CD8-positive, alpha-beta T cell (primary cell): ENCODE measurements at regions of chr20 and their contacts with region 1.

Region 1: DNA sequence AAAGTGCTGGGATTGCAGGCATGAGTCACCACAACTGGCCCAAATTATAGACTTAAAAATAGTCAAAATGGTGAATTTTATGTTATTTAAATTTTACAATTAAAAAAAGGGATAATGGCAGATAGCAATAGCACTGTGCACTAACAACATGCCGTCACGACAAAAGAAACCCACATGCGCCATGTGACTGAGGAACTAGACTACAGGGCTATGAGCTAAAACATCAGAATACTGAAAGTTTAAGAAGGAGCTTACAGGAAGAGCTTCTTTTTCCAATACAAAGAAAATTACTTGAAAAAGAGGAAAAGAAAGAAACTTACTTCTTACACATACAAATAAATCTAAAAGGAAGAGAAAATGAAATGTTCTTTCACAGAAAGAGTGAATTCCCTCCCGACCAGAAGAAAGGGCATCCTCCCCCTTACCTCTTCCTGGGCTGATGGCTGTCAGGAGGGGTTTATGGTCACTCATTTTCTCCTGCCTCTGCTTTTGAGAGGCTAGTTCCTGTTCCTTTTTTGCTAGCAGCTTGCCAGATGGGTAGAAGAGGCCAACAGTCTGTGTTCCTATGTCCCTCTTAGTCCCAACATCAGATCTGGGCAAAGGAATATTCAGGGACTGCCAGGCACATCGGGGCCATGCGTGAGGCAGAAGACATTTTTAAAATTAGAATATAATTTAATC is 54.5 kb downstream of the DZANK1 start:
- DNase-seq: no peak
- ATAC-seq: no peak
- H3K4me3 ChIP-seq: no peak overlapping the region
- H3K4me3 Mint-ChIP-seq: no peak overlapping the region
- H3K27ac ChIP-seq: no peak overlapping the region
- H3K27ac Mint-ChIP-seq: no peak overlapping the region
- H3K4me1 ChIP-seq: no peaks in the 10 kb centered on the region
- H3K4me1 Mint-ChIP-seq: peaks cover 3% of the 10 kb centered on the region
- H3K27me3 ChIP-seq: no peaks in the 10 kb centered on the region
- H3K27me3 Mint-ChIP-seq: no peaks in the 10 kb centered on the region
- CTCF ChIP-seq: no peak

Region 2: GRCh38 chr20:18496042-18496441 is 83.7 kb after region 1 on chr20:
- CTCF ChIA-PET with region 1: no interaction called
- POLR2A ChIA-PET with region 1: no interaction called
- intact Hi-C with region 1: no loop called
- DNase-seq: no peak
- ATAC-seq: no peak
- H3K4me3 ChIP-seq: no peak overlapping the region
- H3K4me3 Mint-ChIP-seq: peak overlapping the region; percentile 96
- H3K27ac ChIP-seq: no peak overlapping the region
- H3K27ac Mint-ChIP-seq: peak overlapping the region; percentile 37
- H3K4me1 ChIP-seq: peaks cover 16% of the 10 kb centered on the region
- H3K4me1 Mint-ChIP-seq: peaks cover 20% of the 10 kb centered on the region
- H3K27me3 ChIP-seq: no peaks in the 10 kb centered on the region
- H3K27me3 Mint-ChIP-seq: no peaks in the 10 kb centered on the region
- CTCF ChIP-seq: no peak

Region 3: GRCh38 chr20:18507218-18508021 is 95.1 kb after region 1 on chr20 and contains the start of gene SEC23B:
- CTCF ChIA-PET with region 1: interaction called, 3 read pairs
- POLR2A ChIA-PET with region 1: no interaction called
- intact Hi-C with region 1: loop called (anchors 1 to 2 kb)
- DNase-seq: peak; percentile 96 to 100 (median 98)
- ATAC-seq: peak; percentile 82
- H3K4me3 ChIP-seq: peak within 1 kb of the TSS; percentile 63 to 87
- H3K4me3 Mint-ChIP-seq: peak within 1 kb of the TSS; percentile 100
- H3K27ac ChIP-seq: peak within 1 kb of the TSS; percentile 97 to 100
- H3K27ac Mint-ChIP-seq: peak within 1 kb of the TSS; percentile 100
- H3K4me1 ChIP-seq: peaks cover 17% of the 10 kb centered on the region
- H3K4me1 Mint-ChIP-seq: peaks cover 47% of the 10 kb centered on the region
- H3K27me3 ChIP-seq: no peaks in the 10 kb centered on the region
- H3K27me3 Mint-ChIP-seq: no peaks in the 10 kb centered on the region
- CTCF ChIP-seq: no peak
- total RNA-seq, gene SEC23B: 31.5 to 31.8 TPM

Region 4: DNA sequence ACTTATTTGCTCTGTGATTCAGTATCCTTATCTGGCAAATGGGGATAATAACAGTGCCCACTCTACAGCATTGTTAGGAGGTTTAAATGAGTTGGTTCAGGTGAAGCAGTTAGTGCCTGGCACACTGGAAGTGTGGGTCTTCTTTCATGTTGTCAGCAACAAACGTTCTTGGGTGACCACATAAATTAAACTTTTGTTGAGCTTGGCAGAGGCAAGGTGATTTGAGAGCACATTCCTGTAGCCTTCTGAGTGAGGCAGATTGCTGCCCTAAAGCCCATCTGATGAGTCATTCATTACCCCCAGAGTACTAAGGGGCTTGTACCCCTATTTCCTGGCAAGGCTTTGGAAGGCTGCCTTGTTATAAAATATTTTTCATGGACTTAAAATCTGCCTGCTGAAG is 121.1 kb after region 1 on chr20:
- CTCF ChIA-PET with region 1: no interaction called
- POLR2A ChIA-PET with region 1: no interaction called
- intact Hi-C with region 1: loop called (anchors 5 kb)
- DNase-seq: no peak
- ATAC-seq: no peak
- H3K4me3 ChIP-seq: no peak overlapping the region
- H3K4me3 Mint-ChIP-seq: no peak overlapping the region
- H3K27ac ChIP-seq: no peak overlapping the region
- H3K27ac Mint-ChIP-seq: no peak overlapping the region
- H3K4me1 ChIP-seq: no peaks in the 10 kb centered on the region
- H3K4me1 Mint-ChIP-seq: no peaks in the 10 kb centered on the region
- H3K27me3 ChIP-seq: no peaks in the 10 kb centered on the region
- H3K27me3 Mint-ChIP-seq: no peaks in the 10 kb centered on the region
- CTCF ChIP-seq: no peak

Region 5: GRCh38 chr20:18632196-18633009 is 220.0 kb after region 1 on chr20:
- CTCF ChIA-PET with region 1: interaction called, 3 read pairs
- POLR2A ChIA-PET with region 1: no interaction called
- intact Hi-C with region 1: loop called in 1 of 2 experiments (anchors 5 kb)
- DNase-seq: peak; percentile 9 to 64 (median 47)
- ATAC-seq: peak; percentile 88
- H3K4me3 ChIP-seq: no peak overlapping the region
- H3K4me3 Mint-ChIP-seq: no peak overlapping the region
- H3K27ac ChIP-seq: no peak overlapping the region
- H3K27ac Mint-ChIP-seq: no peak overlapping the region
- H3K4me1 ChIP-seq: no peaks in the 10 kb centered on the region
- H3K4me1 Mint-ChIP-seq: no peaks in the 10 kb centered on the region
- H3K27me3 ChIP-seq: no peaks in the 10 kb centered on the region
- H3K27me3 Mint-ChIP-seq: no peaks in the 10 kb centered on the region
- CTCF ChIP-seq: peak; percentile 84

Region 6: GRCh38 chr20:19205977-19206396 is 793.6 kb after region 1 on chr20:
- CTCF ChIA-PET with region 1: no interaction called
- POLR2A ChIA-PET with region 1: no interaction called
- intact Hi-C with region 1: loop called in 1 of 2 experiments (anchors 10 kb)
- DNase-seq: peak; percentile 25 to 77 (median 53)
- ATAC-seq: no peak
- H3K4me3 ChIP-seq: no peak overlapping the region
- H3K4me3 Mint-ChIP-seq: no peak overlapping the region
- H3K27ac ChIP-seq: no peak overlapping the region
- H3K27ac Mint-ChIP-seq: no peak overlapping the region
- H3K4me1 ChIP-seq: no peaks in the 10 kb centered on the region
- H3K4me1 Mint-ChIP-seq: no peaks in the 10 kb centered on the region
- H3K27me3 ChIP-seq: peaks cover 0 to 4% of the 10 kb centered on the region in 2 experiments
- H3K27me3 Mint-ChIP-seq: peaks cover 34% of the 10 kb centered on the region
- CTCF ChIP-seq: peak; percentile 72

Region 7: GRCh38 chr20:19964289-19965263 is 1552.2 kb after region 1 on chr20:
- CTCF ChIA-PET with region 1: no interaction called
- POLR2A ChIA-PET with region 1: no interaction called
- intact Hi-C with region 1: loop called in 1 of 2 experiments (anchors 5 kb)
- DNase-seq: no peak
- ATAC-seq: no peak
- H3K4me3 ChIP-seq: no peak overlapping the region
- H3K4me3 Mint-ChIP-seq: no peak overlapping the region
- H3K27ac ChIP-seq: no peak overlapping the region
- H3K27ac Mint-ChIP-seq: no peak overlapping the region
- H3K4me1 ChIP-seq: peaks cover 9% of the 10 kb centered on the region
- H3K4me1 Mint-ChIP-seq: peaks cover 16% of the 10 kb centered on the region
- H3K27me3 ChIP-seq: no peaks in the 10 kb centered on the region
- H3K27me3 Mint-ChIP-seq: no peaks in the 10 kb centered on the region
- CTCF ChIP-seq: no peak